A549 (cell line): ENCODE measurements at regions of chr6 and their contacts with region 1.

Region 1: GRCh38 chr6:6057424-6058053 is 50.8 kb upstream of the NRN1 start:
- DNase-seq: peak; percentile 12 to 50
- ATAC-seq: peak; percentile 70 to 86; a peak in 3 of 6 replicates
- H3K4me3 ChIP-seq: no peak overlapping the region
- H3K27ac ChIP-seq: no peak overlapping the region
- H3K4me1 ChIP-seq: no peaks in the 10 kb centered on the region
- CTCF ChIP-seq: peak; percentile 57
- EP300 ChIP-seq: no peak
- POLR2A ChIP-seq: no peak
- RAD21 ChIP-seq: peak; percentile 46 to 56

Region 2: GRCh38 chr6:5541751-5542432 is 515.6 kb before region 1 on chr6:
- CTCF ChIA-PET with region 1: no interaction called
- POLR2A ChIA-PET with region 1: no interaction called
- DNase-seq: peak in 1 of 2 experiments; percentile 54
- ATAC-seq: peak; percentile 24 to 55; a peak in 3 of 6 replicates
- H3K4me3 ChIP-seq: no peak overlapping the region
- H3K27ac ChIP-seq: peak overlapping the region in 1 of 2 experiments; percentile 55; a peak in 2 of 6 replicates
- H3K4me1 ChIP-seq: no peaks in the 10 kb centered on the region
- CTCF ChIP-seq: no peak
- EP300 ChIP-seq: no peak
- POLR2A ChIP-seq: no peak
- RAD21 ChIP-seq: no peak

Region 3: DNA sequence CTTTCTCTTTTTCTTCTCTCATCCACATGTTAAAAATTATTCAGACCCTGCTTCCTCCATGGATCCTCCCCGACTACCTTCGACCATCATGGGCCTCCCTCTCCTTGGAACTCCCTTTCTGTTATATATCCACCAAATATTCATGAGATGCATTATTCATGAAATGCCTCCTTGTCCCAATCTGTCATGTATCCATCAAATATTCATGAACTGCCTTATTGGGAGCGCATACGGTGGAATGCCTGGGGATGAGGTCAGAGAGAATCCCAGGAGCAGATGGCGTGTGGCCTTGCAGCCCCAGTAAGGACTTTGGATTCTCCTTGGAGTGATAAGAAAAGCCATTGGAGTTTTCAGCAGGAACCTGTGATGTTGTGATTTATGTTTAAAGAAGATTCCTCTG is 147.8 kb before region 1 on chr6:
- CTCF ChIA-PET with region 1: no interaction called
- POLR2A ChIA-PET with region 1: no interaction called
- DNase-seq: no peak
- ATAC-seq: no peak
- H3K4me3 ChIP-seq: no peak overlapping the region
- H3K27ac ChIP-seq: no peak overlapping the region
- H3K4me1 ChIP-seq: no peaks in the 10 kb centered on the region
- CTCF ChIP-seq: no peak
- EP300 ChIP-seq: no peak
- POLR2A ChIP-seq: no peak
- RAD21 ChIP-seq: no peak

Region 4: GRCh38 chr6:6486595-6486994 is 429.1 kb after region 1 on chr6:
- CTCF ChIA-PET with region 1: no interaction called
- POLR2A ChIA-PET with region 1: no interaction called
- DNase-seq: no peak
- ATAC-seq: no peak
- H3K4me3 ChIP-seq: no peak overlapping the region
- H3K27ac ChIP-seq: no peak overlapping the region
- H3K4me1 ChIP-seq: no peaks in the 10 kb centered on the region
- CTCF ChIP-seq: no peak
- EP300 ChIP-seq: no peak
- POLR2A ChIP-seq: no peak
- RAD21 ChIP-seq: no peak

Region 5: DNA sequence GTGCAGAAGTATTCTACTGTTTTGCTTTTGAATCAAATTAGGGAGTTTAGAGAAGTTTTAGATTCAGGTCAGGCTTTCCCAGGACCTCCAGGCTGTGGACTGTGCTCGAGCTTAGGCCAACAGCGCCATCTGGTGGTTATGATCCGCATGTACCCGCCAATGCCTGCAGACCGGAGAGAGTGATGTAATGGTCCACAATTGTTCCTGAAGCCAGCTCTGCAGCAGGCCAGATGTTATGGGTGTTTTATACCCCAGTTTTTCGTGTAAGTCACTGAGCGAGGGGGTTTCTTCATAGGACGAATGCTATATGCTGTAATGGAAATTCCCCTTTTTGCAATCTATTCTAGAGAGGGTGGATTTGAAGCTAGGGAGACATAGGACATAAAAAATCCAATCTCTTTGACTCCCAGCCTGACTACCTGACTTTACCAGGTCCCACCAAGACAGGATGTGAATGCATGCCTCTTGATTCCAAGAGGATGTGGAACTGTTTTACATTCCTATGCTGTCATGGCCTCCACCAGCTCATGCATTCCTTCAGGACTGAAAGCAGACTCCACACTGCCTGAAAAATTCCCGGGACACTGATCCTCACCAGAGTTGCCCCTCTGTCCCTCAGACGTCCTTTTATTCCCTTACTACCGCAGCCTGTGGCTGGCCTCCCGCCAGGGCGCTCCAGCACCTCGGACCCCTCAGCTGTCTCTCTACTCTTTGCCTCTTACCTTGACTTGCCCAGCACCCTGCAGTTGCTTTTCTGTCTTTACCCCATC is 489.8 kb after region 1 on chr6:
- CTCF ChIA-PET with region 1: interaction called, 39 read pairs
- POLR2A ChIA-PET with region 1: no interaction called
- DNase-seq: peak; percentile 58 to 67
- ATAC-seq: peak; percentile 97 to 99
- H3K4me3 ChIP-seq: peak overlapping the region; percentile 30; the same call in 2 of the 3 replicates
- H3K27ac ChIP-seq: no peak overlapping the region
- H3K4me1 ChIP-seq: no peaks in the 10 kb centered on the region
- CTCF ChIP-seq: peak; percentile 73
- EP300 ChIP-seq: no peak
- POLR2A ChIP-seq: no peak
- RAD21 ChIP-seq: peak; percentile 78

Region 6: DNA sequence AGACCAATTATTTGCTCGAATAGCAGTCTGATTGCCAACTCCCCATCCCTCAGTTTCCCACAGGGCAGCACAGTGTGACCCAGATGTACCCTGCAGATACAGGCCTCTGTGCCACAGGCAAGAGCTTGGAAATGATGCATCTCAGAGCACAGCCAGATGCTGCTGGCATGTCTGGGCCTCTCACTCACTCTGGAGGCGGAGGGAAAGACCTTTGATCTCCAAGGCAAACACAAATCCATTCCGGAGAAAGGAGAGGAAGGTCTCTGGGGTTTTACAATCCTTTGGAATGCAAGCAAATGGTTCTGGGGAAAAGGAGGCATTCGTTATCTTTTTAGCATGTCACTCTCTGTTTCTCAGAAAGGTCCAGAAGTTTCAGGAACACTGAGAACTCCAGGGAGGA is 1406.2 kb after region 1 on chr6:
- CTCF ChIA-PET with region 1: no interaction called
- POLR2A ChIA-PET with region 1: no interaction called
- DNase-seq: peak in 1 of 2 experiments; percentile 68
- ATAC-seq: peak in 1 of 2 experiments; percentile 73; a peak in 3 of 6 replicates
- H3K4me3 ChIP-seq: no peak overlapping the region
- H3K27ac ChIP-seq: peak overlapping the region; percentile 52 to 74
- H3K4me1 ChIP-seq: peaks cover 21% of the 10 kb centered on the region
- CTCF ChIP-seq: no peak
- EP300 ChIP-seq: no peak
- POLR2A ChIP-seq: no peak
- RAD21 ChIP-seq: no peak